Lower lobe of right lung (tissue), 2 donors: ENCODE measurements at regions of chr6 and their contacts with region 1.

Region 1: DNA sequence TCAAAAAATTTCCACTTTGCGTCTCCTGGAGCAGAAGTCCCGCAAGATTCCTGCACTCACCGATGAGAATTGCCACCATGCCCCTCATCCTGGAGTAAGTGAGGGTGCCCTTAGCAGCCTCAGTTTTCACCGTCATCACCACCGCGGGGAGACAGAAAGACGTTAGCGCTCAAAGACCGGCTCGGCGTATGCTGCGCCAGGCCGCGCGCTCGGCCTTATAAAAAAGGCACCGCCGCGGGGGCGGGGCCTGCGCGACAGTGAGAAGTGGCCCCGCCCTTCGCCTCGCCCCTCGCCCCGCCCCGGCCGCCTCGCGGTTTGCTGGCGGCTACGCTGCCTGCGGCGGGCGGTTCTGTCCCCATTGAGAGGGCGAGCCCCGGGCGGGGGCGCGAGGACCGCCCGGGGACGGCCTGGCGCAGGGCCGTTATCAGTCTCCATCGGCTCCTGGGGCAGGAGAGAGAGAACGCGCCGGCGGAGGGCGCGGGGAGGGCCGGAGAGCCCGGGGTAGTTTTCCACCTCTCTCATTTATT is 122.3 kb upstream of the SLC2A12 start:
- DNase-seq: peak; percentile 96
- ATAC-seq: peak; percentile 92 to 96
- H3K4me3 ChIP-seq: peak overlapping the region; percentile 67
- H3K27ac ChIP-seq: peak overlapping the region; percentile 99
- H3K4me1 ChIP-seq: peaks cover 69% of the 10 kb centered on the region
- H3K27me3 ChIP-seq: no peaks in the 10 kb centered on the region
- CTCF ChIP-seq: no peak

Region 2: GRCh38 chr6:133804263-133804662 is 370.5 kb before region 1 on chr6:
- intact Hi-C with region 1: no loop called
- DNase-seq: no peak
- ATAC-seq: no peak
- H3K4me3 ChIP-seq: no peak overlapping the region
- H3K27ac ChIP-seq: no peak overlapping the region
- H3K4me1 ChIP-seq: no peaks in the 10 kb centered on the region
- H3K27me3 ChIP-seq: no peaks in the 10 kb centered on the region
- CTCF ChIP-seq: no peak

Region 3: GRCh38 chr6:134267917-134268361 is 93.2 kb after region 1 on chr6:
- intact Hi-C with region 1: no loop called
- DNase-seq: no peak
- ATAC-seq: no peak
- H3K4me3 ChIP-seq: no peak overlapping the region
- H3K27ac ChIP-seq: no peak overlapping the region
- H3K4me1 ChIP-seq: no peaks in the 10 kb centered on the region
- H3K27me3 ChIP-seq: no peaks in the 10 kb centered on the region
- CTCF ChIP-seq: no peak

Region 4: GRCh38 chr6:134640975-134641429 is 466.3 kb after region 1 on chr6:
- intact Hi-C with region 1: loop called (anchors 5 kb)
- DNase-seq: peak; percentile 73
- ATAC-seq: peak; percentile 89 to 96
- H3K4me3 ChIP-seq: no peak overlapping the region
- H3K27ac ChIP-seq: peak overlapping the region; percentile 25
- H3K4me1 ChIP-seq: peaks cover 16% of the 10 kb centered on the region
- H3K27me3 ChIP-seq: no peaks in the 10 kb centered on the region
- CTCF ChIP-seq: peak; percentile 95

Region 5: GRCh38 chr6:134822920-134823709 is 648.4 kb after region 1 on chr6:
- intact Hi-C with region 1: loop called (anchors 5 kb)
- DNase-seq: peak; percentile 54
- ATAC-seq: peak; percentile 89 to 94
- H3K4me3 ChIP-seq: no peak overlapping the region
- H3K27ac ChIP-seq: no peak overlapping the region
- H3K4me1 ChIP-seq: peaks cover 5% of the 10 kb centered on the region
- H3K27me3 ChIP-seq: no peaks in the 10 kb centered on the region
- CTCF ChIP-seq: peak; percentile 77